Ascending aorta (tissue), 2 donors: ENCODE measurements at regions of chr12 and their contacts with region 1.

Region 1: DNA sequence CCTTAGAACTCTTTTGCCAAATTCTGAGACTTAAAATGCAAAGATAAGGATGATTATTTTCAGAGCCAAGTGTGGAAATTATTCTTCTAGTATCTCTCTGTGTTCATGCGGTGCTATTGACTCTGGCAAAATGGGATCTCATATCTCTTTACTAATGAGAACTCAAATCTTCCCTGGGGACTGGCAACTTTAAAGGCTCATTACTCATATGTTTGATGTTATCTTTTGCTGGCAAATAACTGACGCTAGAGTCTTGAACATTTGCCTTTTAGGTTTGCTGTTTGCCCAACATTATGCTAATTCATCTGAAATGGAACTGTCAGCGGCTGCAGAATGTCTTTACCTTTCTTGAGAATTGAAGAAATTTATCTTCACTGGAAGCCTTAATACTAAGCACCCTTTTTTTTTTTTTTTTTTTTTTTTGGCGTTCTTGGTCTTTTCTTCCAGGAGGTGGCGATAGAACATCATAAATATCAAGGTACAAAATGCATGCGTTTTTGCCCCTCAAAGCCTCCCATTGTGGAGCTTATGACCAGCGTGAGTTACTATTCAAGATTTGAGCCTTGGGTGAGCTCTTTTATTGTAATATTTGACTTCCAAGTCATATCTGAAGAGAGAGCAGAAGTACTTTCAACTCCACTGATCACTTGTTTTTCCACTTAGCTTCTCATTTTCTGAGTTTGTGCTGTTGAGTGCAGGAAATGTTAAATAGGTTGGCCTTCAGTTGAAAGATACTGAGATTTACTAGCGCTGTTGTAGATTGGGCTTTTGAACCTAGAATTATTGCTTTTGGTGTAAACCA is 86.6 kb downstream of the CAND1 start:
- DNase-seq: no peak
- H3K4me3 ChIP-seq: no peak overlapping the region
- H3K27ac ChIP-seq: peak overlapping the region in 1 of 2 donors; percentile 38
- H3K4me1 ChIP-seq: peaks cover 0 to 6% of the 10 kb centered on the region in 2 donors
- H3K27me3 ChIP-seq: no peaks in the 10 kb centered on the region
- CTCF ChIP-seq: peak; percentile 6 to 49 (median 38)

Region 2: GRCh38 chr12:67441736-67442346 is 86.1 kb after region 1 on chr12:
- intact Hi-C with region 1: loop called (anchors 1 kb)
- DNase-seq: peak in 1 of 2 donors; percentile 90
- H3K4me3 ChIP-seq: no peak overlapping the region
- H3K27ac ChIP-seq: peak overlapping the region in 1 of 2 donors; percentile 8
- H3K4me1 ChIP-seq: peaks cover 4% of the 10 kb centered on the region in 2 donors
- H3K27me3 ChIP-seq: no peaks in the 10 kb centered on the region
- CTCF ChIP-seq: peak; percentile 61 to 85 (median 79)

Region 3: DNA sequence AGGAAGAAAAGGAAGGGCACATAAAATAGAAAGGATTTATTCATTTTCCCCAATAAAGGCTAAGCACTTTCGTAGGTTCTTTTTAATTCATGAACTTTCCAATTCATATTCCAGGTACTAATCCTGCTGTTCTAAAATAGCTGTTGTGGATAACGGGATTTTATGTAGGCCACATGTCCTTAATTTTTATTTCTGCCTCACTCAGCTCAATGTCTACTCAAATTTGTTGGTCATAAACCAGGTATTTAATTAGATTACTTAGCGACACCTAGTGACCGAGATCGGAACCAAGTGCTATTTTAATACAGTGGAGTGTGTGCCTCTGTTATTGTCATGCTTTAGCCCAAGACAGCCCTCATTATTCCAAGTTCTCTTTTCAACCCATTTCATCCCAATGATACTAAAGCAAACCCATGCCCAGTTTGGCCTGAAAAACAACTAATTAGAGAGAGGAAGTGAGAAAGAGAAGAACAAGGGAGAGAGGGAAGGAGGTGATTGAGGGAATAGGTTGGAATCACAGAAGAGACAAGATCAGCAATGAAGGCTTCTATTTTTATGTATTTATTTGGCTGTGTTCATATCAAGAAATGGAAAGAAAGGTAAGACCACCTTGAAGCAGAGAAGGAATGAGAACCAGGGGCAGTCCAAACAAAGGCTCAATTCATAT is 587.6 kb after region 1 on chr12:
- intact Hi-C with region 1: loop called (anchors 1 kb)
- DNase-seq: peak in 1 of 2 donors; percentile 87
- H3K4me3 ChIP-seq: no peak overlapping the region
- H3K27ac ChIP-seq: no peak overlapping the region
- H3K4me1 ChIP-seq: no peaks in the 10 kb centered on the region
- H3K27me3 ChIP-seq: no peaks in the 10 kb centered on the region
- CTCF ChIP-seq: peak; percentile 53 to 76 (median 54)

Region 4: GRCh38 chr12:68317047-68317667 is 961.4 kb after region 1 on chr12:
- intact Hi-C with region 1: loop called (anchors 10 kb)
- DNase-seq: no peak
- H3K4me3 ChIP-seq: no peak overlapping the region
- H3K27ac ChIP-seq: no peak overlapping the region
- H3K4me1 ChIP-seq: no peaks in the 10 kb centered on the region
- H3K27me3 ChIP-seq: no peaks in the 10 kb centered on the region
- CTCF ChIP-seq: peak; percentile 39 to 72 (median 47)